Right ventricle myocardium inferior (tissue), 1 donor: ENCODE measurements at regions of chr6 and their contacts with region 1.

Region 1: GRCh38 chr6:8219352-8219943 is 117.1 kb upstream of the EEF1E1 start:
- DNase-seq: no peak
- ATAC-seq: no peak

Region 2: DNA sequence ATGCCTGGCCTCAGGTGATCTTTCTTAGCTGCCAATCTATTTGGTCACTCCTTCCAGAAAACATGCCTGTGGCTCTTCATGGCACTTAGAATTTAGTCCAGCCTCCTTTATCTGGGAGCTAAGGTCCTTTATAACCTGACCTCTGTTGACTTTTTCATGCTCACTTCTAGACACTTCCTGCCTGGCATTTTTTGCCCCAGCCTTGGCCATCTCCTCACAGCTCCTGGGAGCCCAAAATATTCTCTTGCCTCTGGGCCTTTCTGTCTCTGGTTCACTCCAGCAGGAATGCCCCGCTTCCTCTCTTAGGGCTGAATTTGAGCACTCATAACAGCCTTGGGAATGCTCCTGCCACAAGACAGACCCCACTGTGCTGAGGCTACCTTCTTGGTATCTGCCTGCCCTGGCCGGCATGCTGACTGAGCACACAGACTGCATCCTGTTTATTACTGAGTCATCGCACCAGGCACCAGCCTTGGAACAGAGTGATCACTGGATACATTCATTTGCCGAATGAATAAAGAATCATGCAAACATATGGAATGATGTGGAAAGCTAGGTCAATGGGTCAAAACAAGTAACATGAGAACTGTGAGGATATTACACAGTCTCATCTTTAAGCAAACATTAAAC is 111.3 kb before region 1 on chr6:
- intact Hi-C with region 1: no loop called
- DNase-seq: no peak
- ATAC-seq: no peak

Region 3: DNA sequence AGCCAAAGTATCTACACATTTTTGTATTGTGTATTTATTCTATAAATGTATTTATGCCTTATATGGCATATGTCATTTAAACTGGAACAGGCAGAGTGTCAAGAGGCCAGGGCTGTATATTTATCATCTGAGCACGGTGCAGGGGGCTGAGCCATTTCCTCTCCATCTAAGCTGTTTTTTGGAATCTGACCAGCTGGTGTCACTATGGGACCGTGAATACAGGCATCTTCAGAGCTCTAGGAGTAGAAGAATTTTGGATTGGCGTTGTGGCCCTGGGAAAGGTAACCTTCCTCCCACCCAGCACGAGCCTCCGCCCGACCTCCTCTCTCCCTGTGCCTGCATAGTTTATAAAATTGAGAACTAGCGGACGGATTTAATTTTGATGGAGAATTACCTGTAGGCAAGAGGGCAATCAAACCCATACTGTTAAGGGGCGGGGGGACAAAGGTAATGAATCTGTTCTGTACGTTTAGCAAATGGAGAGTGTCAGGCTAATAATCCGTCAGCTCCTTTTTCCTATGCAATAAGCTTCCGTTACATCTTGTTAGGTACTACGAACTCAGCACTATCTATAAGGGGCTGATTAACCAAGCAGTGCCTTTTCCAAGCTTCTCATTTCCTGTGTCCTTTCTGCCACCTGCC is 88.1 kb before region 1 on chr6:
- intact Hi-C with region 1: loop called (anchors 1 kb)
- DNase-seq: no peak
- ATAC-seq: peak; percentile 59